Activated T-helper 1 cell treated with anti-CD3 and anti-CD28 coated beads, Interleukin-12 subunit alpha, Interleukin-12 subunit beta, Interleukin-2, Interleukin-4 antibody, amounts not matched to agents 30 ng/mL and 10 ng/mL and 1 ng/mL, durations not matched to agents 14 hours and 24 hours and 36 hours (primary cell): ENCODE measurements at regions of chr3 and their contacts with region 1.

Region 1: GRCh38 chr3:95247384-95247783 is 1184.5 kb downstream of the NSUN3 start:
- DNase-seq: no peak
- H3K4me3 Mint-ChIP-seq: no peak overlapping the region
- H3K27ac Mint-ChIP-seq: no peak overlapping the region
- H3K4me1 Mint-ChIP-seq: no peaks in the 10 kb centered on the region
- H3K27me3 Mint-ChIP-seq: no peaks in the 10 kb centered on the region

Region 2: DNA sequence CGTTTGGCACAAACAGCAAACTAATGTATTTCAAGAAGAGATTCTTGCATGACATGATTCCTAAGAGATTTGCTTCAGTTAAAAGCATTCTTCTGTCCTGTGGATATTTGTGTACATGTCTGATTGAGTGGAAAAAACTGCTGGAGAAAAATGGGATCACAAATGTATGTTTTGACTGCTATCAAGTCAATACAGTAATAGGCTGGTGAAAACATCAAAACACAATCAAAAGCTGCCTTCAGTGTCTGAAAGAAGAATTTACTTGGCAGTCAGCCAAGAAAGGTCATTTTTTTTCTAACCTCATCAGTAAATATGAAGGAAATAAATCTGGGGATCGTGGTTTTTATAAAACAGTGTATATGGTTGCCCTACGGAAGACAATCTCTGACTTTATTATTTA is 30.2 kb after region 1 on chr3:
- intact Hi-C with region 1: loop called (anchors 1 kb)
- DNase-seq: no peak
- H3K4me3 Mint-ChIP-seq: no peak overlapping the region
- H3K27ac Mint-ChIP-seq: no peak overlapping the region
- H3K4me1 Mint-ChIP-seq: no peaks in the 10 kb centered on the region
- H3K27me3 Mint-ChIP-seq: no peaks in the 10 kb centered on the region

Region 3: GRCh38 chr3:96831175-96831574 is 1583.8 kb after region 1 on chr3:
- intact Hi-C with region 1: no loop called
- DNase-seq: no peak
- H3K4me3 Mint-ChIP-seq: no peak overlapping the region
- H3K27ac Mint-ChIP-seq: no peak overlapping the region
- H3K4me1 Mint-ChIP-seq: no peaks in the 10 kb centered on the region
- H3K27me3 Mint-ChIP-seq: no peaks in the 10 kb centered on the region